Heart right ventricle (tissue), 16 donors: ENCODE measurements at regions of chr3 and their contacts with region 1.

Region 1: GRCh38 chr3:112097378-112097777 is 11.2 kb downstream of the C3orf52 start:
- DNase-seq: no peak
- ATAC-seq: peak in 7 of 8 donors; percentile 31 to 96 (median 73)
- H3K4me3 ChIP-seq: no peak overlapping the region
- H3K27ac ChIP-seq: no peak overlapping the region
- H3K4me1 ChIP-seq: peaks cover under 1 to 22% (median 11%) of the 10 kb centered on the region in 9 donors
- H3K27me3 ChIP-seq: peaks cover 0 to 25% (median 0%) of the 10 kb centered on the region in 7 donors
- CTCF ChIP-seq: no peak

Region 2: DNA sequence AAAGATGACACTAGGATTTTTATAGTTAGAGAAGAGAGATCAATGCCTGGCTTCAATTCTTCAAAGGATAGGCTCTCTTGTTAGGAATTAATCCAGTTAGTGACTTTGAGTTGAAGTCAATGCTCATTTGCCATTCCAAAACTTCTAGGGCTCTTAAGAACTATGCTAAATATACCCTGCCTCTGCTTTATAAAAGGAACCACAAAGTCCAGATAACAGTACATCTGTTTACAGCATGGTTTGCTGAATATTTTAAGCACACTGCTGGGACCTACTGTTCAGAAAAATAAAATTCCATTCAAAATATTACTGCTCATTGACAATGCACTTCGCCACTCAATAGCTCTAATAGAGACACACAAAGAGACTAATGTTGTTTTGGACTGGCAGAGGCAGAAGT is 1973.4 kb before region 1 on chr3:
- intact Hi-C with region 1: loop called in 1 of 10 experiments (anchors 5 kb)
- DNase-seq: no peak
- ATAC-seq: no peak
- H3K4me3 ChIP-seq: no peak overlapping the region
- H3K27ac ChIP-seq: no peak overlapping the region
- H3K4me1 ChIP-seq: no peaks in the 10 kb centered on the region
- H3K27me3 ChIP-seq: no peaks in the 10 kb centered on the region
- CTCF ChIP-seq: no peak